ENCODE measurements at regions of chr7 and their contacts with region 1.

Region 1: GRCh38 chr7:76191783-76192275 is 9.9 kb upstream of the SRRM3 start:
- DNase-seq: no peak
- ATAC-seq: no peak
- H3K4me3 ChIP-seq: no peak overlapping the region
- H3K27ac ChIP-seq: no peak overlapping the region
- H3K4me1 ChIP-seq: no peaks in the 10 kb centered on the region
- H3K27me3 ChIP-seq: no peaks in the 10 kb centered on the region
- CTCF ChIP-seq: no peak
- POLR2A ChIP-seq: no peak

Region 2: GRCh38 chr7:76244781-76245391 is 53.1 kb after region 1 on chr7:
- intact Hi-C with region 1: loop called (anchors 10 kb)
- DNase-seq: no peak
- ATAC-seq: no peak
- H3K4me3 ChIP-seq: no peak overlapping the region
- H3K27ac ChIP-seq: no peak overlapping the region
- H3K4me1 ChIP-seq: no peaks in the 10 kb centered on the region
- H3K27me3 ChIP-seq: no peaks in the 10 kb centered on the region
- CTCF ChIP-seq: no peak
- POLR2A ChIP-seq: no peak

Measured in body of pancreas (tissue), 4 donors.